Naive thymus-derived CD4-positive, alpha-beta T cell (primary cell): ENCODE measurements at regions of chr1 and their contacts with region 1.

Region 1: GRCh38 chr1:2575801-2576663 is 10.5 kb upstream of the PRXL2B start:
- DNase-seq: no peak
- ATAC-seq: no peak
- H3K4me3 ChIP-seq: no peak overlapping the region
- H3K4me3 Mint-ChIP-seq: peak overlapping the region in 3 of 10 donors; percentile 25 to 76 (median 35)
- H3K27ac ChIP-seq: peak overlapping the region; percentile 8
- H3K27ac Mint-ChIP-seq: peak overlapping the region in 7 of 9 donors; percentile 43 to 96 (median 62)
- H3K4me1 ChIP-seq: peaks cover 20 to 33% of the 10 kb centered on the region in 2 donors
- H3K4me1 Mint-ChIP-seq: peaks cover 23 to 59% (median 48%) of the 10 kb centered on the region in 7 donors
- H3K27me3 ChIP-seq: no peaks in the 10 kb centered on the region
- H3K27me3 Mint-ChIP-seq: no peaks in the 10 kb centered on the region

Region 2: GRCh38 chr1:2561898-2562545 is 14.0 kb before region 1 on chr1:
- CTCF ChIA-PET with region 1: interaction called, 13 read pairs
- POLR2A ChIA-PET with region 1: interaction called, 253 read pairs
- intact Hi-C with region 1: no loop called
- DNase-seq: no peak
- ATAC-seq: peak; percentile 60
- H3K4me3 ChIP-seq: no peak overlapping the region
- H3K4me3 Mint-ChIP-seq: peak overlapping the region in 1 of 10 donors; percentile 18
- H3K27ac ChIP-seq: peak overlapping the region; percentile 40
- H3K27ac Mint-ChIP-seq: peak overlapping the region in 2 of 9 donors; percentile 9 to 84
- H3K4me1 ChIP-seq: peaks cover 12 to 17% of the 10 kb centered on the region in 2 donors
- H3K4me1 Mint-ChIP-seq: peaks cover 6 to 26% (median 19%) of the 10 kb centered on the region in 7 donors
- H3K27me3 ChIP-seq: no peaks in the 10 kb centered on the region
- H3K27me3 Mint-ChIP-seq: no peaks in the 10 kb centered on the region